GM23248 (cell line): ENCODE measurements at regions of chr6 and their contacts with region 1.

Region 1: GRCh38 chr6:170529839-170530469 is 23.2 kb downstream of the PSMB1 start:
- DNase-seq: peak; percentile 83
- H3K4me3 ChIP-seq: no peak overlapping the region
- H3K27ac ChIP-seq: peak overlapping the region; percentile 16; the same call in 1 of the 2 replicates
- H3K4me1 ChIP-seq: peaks cover 3% of the 10 kb centered on the region; the same call in 1 of the 2 replicates
- H3K27me3 ChIP-seq: no peaks in the 10 kb centered on the region

Region 2: GRCh38 chr6:169789982-169790927 is 739.7 kb before region 1 on chr6:
- in situ Hi-C with region 1: loop called (anchors 10 kb)
- DNase-seq: peak; percentile 92
- H3K4me3 ChIP-seq: peak overlapping the region; percentile 75
- H3K27ac ChIP-seq: peak overlapping the region; percentile 37
- H3K4me1 ChIP-seq: no peaks in the 10 kb centered on the region; the same call in 1 of the 2 replicates
- H3K27me3 ChIP-seq: no peaks in the 10 kb centered on the region

Region 3: DNA sequence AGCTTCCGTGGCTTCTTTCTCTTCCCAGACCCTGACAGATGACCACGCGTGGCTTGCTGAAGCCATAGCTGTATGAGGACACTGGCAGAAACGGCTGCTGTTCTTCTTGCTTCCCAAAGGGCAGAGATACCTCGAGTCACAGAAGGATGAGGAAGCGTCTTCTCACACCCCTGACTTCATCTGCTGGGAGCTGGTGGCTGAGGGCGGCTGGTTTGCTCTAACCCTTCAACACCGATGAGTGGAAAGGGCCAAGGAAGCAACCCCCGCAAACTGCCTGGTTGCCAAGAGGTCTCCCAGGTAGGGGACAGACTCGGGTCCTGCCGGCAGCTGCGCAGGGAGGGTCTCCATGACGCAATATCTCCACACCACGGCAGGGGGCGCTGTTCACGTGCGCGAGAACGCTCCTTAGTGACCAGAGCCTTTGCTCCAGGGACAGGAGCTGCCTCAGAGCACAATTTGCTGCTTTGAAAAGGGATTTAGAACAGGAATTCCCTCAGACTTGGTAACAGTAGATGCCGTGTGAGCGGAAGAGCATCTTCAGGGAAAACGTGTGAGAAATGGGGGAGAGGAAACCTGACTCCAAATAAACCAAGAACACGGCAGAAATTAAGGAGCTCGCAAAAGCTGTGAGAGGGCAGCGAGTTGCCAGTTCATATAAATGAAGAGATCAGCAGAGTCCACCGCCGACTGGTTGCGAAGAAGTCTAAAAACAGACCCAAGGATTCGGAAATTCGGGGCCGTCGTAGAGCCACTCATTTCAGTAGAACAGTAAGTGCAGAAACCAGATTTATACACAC is 698.3 kb before region 1 on chr6:
- in situ Hi-C with region 1: loop called (anchors 5 kb)
- DNase-seq: peak; percentile 63
- H3K4me3 ChIP-seq: no peak overlapping the region
- H3K27ac ChIP-seq: no peak overlapping the region
- H3K4me1 ChIP-seq: no peaks in the 10 kb centered on the region
- H3K27me3 ChIP-seq: peaks cover 24% of the 10 kb centered on the region; the same call in 1 of the 2 replicates